ENCODE measurements at regions of chr11 and their contacts with region 1.

Region 1: DNA sequence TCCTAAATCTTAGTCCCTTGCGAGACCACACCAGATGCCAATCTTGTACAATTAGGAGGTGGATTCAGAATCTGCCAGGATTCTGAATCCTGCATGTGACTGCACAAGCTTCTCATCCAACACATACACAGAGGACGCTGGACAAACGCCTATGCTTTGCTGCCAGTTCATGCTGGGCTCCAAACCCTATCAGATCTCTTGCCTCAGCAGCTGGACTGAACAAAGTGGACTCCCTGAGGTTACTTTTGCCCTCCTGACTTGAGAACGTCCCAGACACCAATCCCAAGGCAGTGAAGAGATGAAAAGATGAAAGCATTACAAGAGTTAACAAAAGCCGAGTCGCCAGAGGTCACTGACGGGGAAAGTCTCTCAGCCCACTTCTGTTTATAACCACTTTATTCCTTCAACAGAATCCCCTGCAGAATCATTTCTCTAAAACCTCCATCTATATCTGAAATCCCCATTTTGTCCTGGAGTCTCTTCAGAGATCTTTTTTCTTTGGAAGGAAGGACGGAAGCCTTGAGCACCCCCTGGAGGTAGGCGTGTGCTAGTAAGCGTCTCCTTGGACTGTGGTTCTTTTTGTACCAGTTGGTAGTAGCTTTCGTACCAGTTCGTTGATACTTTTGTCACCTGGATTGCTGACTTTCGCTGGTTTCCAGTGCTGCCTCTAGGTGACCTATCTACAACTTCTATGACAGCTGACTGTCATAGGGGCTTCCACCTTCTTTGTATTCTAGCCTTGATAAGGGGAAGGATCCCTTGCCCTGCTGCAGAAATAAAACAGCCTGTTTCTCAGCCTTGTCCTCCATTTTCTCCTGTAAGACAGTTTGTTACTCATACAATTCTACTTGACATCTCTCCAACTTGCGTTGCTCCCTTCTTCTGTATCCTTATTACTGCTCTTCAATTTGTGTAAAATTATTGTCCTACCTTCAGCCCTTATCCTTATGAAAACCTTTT is 26.1 kb upstream of the EED start:
- DNase-seq: peak; percentile 61 to 93
- H3K4me3 ChIP-seq: no peak overlapping the region
- CTCF ChIP-seq: peak in 1 of 3 donors; percentile 68
- POLR2A ChIP-seq: no peak

Region 2: DNA sequence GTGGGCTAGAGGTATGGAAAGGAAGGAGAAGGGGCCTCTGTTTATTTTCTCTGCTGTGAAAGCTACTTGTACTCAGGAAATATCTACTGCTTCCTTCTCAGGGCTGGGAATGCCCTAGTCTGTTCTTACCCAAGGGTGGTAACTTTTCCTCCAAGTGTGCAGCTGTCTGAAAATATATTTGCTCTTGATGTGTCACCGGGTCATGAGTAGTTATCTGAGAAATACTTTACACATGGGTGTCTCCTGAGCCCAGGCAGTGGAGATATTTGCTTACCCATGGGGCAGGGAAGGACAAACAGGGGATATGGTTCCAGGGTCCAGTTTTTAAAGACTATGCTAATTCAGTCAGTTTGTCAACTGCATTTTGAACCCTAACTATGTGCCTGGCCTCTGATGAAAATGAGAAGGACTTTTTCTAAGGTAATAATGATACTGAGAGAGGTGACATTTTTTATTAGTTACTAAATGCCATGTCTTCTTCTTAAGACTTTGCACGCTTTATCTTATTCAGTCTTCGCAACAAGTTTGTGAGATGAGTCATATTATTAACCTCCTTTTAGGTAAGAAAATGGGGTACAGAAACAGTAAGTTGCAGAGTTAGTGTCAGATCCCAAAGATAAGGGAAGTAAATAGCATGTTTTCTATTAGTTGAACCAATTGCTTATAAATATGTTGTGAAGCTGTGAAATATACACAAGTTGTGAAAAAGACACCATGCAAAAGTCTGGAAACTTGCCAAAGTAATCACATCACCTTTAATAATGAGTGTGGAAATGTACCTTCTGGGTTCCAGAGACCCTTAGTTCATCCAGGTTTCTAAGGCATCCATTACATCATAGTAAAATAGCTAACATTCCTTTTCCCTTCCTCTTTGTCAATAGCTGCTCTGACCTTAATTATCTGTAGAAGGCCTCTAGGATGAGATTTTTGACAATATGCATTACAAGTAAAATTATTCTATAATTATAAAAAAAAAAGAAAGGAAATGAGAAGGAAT is 430.3 kb before region 1 on chr11:
- intact Hi-C with region 1: no loop called
- DNase-seq: no peak
- H3K4me3 ChIP-seq: no peak overlapping the region
- CTCF ChIP-seq: no peak
- POLR2A ChIP-seq: no peak

Region 3: GRCh38 chr11:85854557-85855340 is 363.7 kb before region 1 on chr11:
- intact Hi-C with region 1: loop called (anchors 5 kb)
- DNase-seq: peak; percentile 87 to 98
- H3K4me3 ChIP-seq: peak overlapping the region; percentile 38
- CTCF ChIP-seq: peak in 1 of 3 donors; percentile 52
- POLR2A ChIP-seq: no peak

Region 4: DNA sequence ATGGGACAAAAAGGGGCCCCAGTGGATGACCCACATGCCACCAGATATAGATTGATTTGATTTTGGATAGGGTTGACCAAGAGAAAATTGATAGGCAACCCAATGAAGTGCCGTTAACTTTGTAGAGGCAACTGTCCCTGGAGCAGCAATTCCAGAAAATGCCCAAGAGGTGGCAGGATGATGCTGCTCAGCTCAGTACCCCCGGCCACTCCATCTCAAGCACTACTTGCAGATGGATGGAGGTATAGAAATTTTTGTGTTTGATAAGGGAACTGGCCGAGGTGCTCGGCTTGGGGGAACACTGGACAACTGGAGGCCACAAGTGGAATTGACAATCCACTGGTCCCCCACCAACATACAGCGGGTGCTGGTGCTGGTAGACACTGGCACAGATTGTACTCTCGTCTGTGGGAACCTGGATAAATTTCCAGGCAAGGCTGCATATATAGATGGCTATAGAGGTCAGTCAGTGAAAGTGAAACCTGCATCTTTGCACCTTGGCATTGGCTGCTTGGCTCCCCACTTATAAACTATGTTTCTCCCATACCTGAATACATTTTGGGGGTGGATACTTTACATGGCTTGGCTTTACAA is 276.9 kb before region 1 on chr11:
- intact Hi-C with region 1: loop called (anchors 10 kb)
- DNase-seq: no peak
- H3K4me3 ChIP-seq: no peak overlapping the region
- CTCF ChIP-seq: no peak
- POLR2A ChIP-seq: no peak

Region 5: DNA sequence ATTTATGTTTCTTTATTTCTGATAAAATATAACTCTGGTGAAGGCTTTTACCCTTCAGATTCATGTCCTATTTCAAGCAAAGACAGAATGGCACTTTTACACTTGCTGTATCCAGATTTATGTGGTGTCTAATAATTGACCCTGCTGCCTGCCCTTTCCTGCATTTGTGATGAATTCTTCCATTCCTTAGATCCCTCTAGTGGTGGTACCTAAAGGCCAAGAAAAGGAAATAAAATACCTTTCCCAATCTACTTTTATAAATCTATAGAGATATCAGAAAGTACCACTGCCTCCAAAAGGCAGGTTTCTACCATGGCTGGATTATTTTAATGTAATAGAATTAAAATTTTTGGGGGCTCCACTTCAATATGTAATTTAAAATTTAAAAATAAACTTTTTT is 190.4 kb after region 1 on chr11:
- intact Hi-C with region 1: no loop called
- DNase-seq: no peak
- H3K4me3 ChIP-seq: no peak overlapping the region
- CTCF ChIP-seq: no peak
- POLR2A ChIP-seq: no peak